CD4-positive, alpha-beta T cell (primary cell): ENCODE measurements at regions of chr2 and their contacts with region 1.

Region 1: DNA sequence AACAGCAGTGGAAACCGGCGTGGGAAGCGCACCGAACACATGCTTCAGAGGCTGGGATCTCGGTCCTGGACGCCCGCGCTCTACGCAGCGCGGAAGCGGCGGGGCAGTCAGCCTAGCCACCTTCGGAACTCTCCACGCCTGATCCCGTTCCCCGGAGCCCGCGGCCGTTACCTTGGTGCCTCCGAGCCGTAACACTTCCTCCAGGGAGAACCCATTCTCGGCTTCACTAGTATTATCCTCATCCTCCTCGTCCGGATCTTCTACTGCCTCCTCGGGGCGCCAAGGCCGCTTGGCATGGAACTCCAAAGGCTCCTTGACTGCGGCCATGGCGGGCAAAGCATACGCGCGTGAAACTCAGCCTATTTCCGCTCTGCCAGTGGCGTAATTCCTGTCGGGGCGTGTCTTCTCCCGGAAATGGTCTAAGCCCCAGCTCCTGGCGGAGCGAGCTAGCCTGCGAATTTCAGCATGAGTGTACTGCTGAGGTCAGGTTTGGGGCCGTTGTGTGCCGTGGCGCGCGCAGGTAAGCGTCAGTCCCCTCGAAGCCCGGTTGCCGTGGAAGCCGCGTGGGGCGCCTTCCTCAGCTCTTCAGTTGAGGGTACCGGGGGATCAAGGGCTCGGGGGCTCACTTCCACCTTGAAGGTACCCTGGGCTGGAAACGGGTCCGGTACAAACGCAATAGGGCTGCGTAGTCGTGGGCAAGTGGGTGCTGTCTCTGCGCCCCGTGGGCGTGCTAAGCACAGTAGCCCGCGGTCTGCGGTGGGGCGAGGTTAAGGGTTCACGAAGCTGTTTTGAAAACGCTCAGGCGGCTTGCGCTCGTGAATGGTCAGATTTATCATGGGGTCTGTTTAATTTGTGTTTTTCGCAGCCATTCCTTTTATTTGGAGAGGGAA is at the starts of genes CEBPZ and NDUFAF7:
- DNase-seq: peak; percentile 75 to 95 (median 83)
- ATAC-seq: peak; percentile 88
- H3K4me3 ChIP-seq: peak within 1 kb of the TSS; percentile 79
- H3K4me3 Mint-ChIP-seq: no peak within 1 kb of the TSS
- H3K27ac ChIP-seq: peak within 1 kb of the TSS; percentile 85
- H3K27ac Mint-ChIP-seq: no peak within 1 kb of the TSS
- H3K4me1 ChIP-seq: peaks cover 31% of the 10 kb centered on the region
- H3K4me1 Mint-ChIP-seq: peaks cover 38% of the 10 kb centered on the region
- H3K27me3 ChIP-seq: no peaks in the 10 kb centered on the region
- H3K27me3 Mint-ChIP-seq: no peaks in the 10 kb centered on the region
- CTCF ChIP-seq: no peak
- total RNA-seq, gene CEBPZ: 92.3 to 102 TPM
- total RNA-seq, gene NDUFAF7: 21.4 to 24.1 TPM

Region 2: DNA sequence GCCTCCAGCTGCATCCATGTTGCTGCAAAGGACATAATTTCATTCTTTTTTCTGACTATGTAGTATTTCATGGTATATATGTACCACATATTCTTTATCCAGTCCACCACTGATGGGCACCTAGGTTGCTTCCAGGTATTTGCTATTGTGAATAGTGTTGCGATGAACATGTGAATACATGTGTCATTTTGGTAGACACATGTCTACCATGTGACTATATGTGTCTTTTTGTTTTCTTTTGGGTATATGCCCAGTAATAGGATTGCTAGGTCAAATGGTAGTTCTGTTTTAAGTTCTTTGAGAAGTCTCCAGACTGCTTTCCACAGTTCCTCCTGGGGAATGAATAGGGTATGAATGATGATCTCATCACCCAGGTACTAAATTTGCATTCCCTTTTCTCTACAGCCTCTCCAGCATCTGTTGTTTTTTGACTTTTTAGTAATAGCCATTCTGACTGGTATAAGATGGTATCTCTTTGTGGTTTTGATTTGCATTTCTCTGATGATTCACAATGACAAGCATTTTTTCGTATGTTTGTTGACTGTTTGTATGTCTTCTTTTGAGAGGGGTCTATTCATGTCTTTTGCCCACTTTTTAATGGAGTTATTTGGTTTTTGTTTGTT is 597.9 kb before region 1 on chr2:
- CTCF ChIA-PET with region 1: no interaction called
- POLR2A ChIA-PET with region 1: no interaction called
- intact Hi-C with region 1: no loop called
- DNase-seq: no peak
- ATAC-seq: no peak
- H3K4me3 ChIP-seq: no peak overlapping the region
- H3K4me3 Mint-ChIP-seq: no peak overlapping the region
- H3K27ac ChIP-seq: no peak overlapping the region
- H3K27ac Mint-ChIP-seq: no peak overlapping the region
- H3K4me1 ChIP-seq: no peaks in the 10 kb centered on the region
- H3K4me1 Mint-ChIP-seq: no peaks in the 10 kb centered on the region
- H3K27me3 ChIP-seq: peaks cover 0 to 4% of the 10 kb centered on the region in 2 experiments
- H3K27me3 Mint-ChIP-seq: peaks cover 14% of the 10 kb centered on the region
- CTCF ChIP-seq: no peak

Region 3: GRCh38 chr2:36731941-36732648 is 499.4 kb before region 1 on chr2:
- CTCF ChIA-PET with region 1: no interaction called
- POLR2A ChIA-PET with region 1: no interaction called
- intact Hi-C with region 1: no loop called
- DNase-seq: no peak
- ATAC-seq: no peak
- H3K4me3 ChIP-seq: no peak overlapping the region
- H3K4me3 Mint-ChIP-seq: no peak overlapping the region
- H3K27ac ChIP-seq: no peak overlapping the region
- H3K27ac Mint-ChIP-seq: no peak overlapping the region
- H3K4me1 ChIP-seq: no peaks in the 10 kb centered on the region
- H3K4me1 Mint-ChIP-seq: no peaks in the 10 kb centered on the region
- H3K27me3 ChIP-seq: peaks cover 0 to under 1% of the 10 kb centered on the region in 2 experiments
- H3K27me3 Mint-ChIP-seq: peaks cover 2% of the 10 kb centered on the region
- CTCF ChIP-seq: no peak

Region 4: GRCh38 chr2:37083873-37084794 is 147.4 kb before region 1 on chr2 and contains the starts of genes GPATCH11 and HEATR5B:
- CTCF ChIA-PET with region 1: no interaction called
- POLR2A ChIA-PET with region 1: interaction called, 4 read pairs
- intact Hi-C with region 1: loop called in 1 of 2 experiments (anchors 5 kb)
- DNase-seq: peak; percentile 80 to 98 (median 89)
- ATAC-seq: peak; percentile 84
- H3K4me3 ChIP-seq: peak within 1 kb of the TSS; percentile 94
- H3K4me3 Mint-ChIP-seq: no peak within 1 kb of the TSS
- H3K27ac ChIP-seq: peak within 1 kb of the TSS; percentile 77 to 82
- H3K27ac Mint-ChIP-seq: no peak within 1 kb of the TSS
- H3K4me1 ChIP-seq: peaks cover 42% of the 10 kb centered on the region
- H3K4me1 Mint-ChIP-seq: no peaks in the 10 kb centered on the region
- H3K27me3 ChIP-seq: no peaks in the 10 kb centered on the region
- H3K27me3 Mint-ChIP-seq: no peaks in the 10 kb centered on the region
- CTCF ChIP-seq: no peak
- total RNA-seq, gene GPATCH11: 4.0 to 4.1 TPM
- total RNA-seq, gene HEATR5B: 23.4 to 23.9 TPM

Region 5: GRCh38 chr2:37168217-37168981 is 63.1 kb before region 1 on chr2:
- CTCF ChIA-PET with region 1: no interaction called
- POLR2A ChIA-PET with region 1: no interaction called
- intact Hi-C with region 1: loop called in 1 of 2 experiments (anchors 5 kb)
- DNase-seq: peak in 6 of 14 experiments; percentile 6 to 66 (median 46)
- ATAC-seq: peak; percentile 85
- H3K4me3 ChIP-seq: no peak overlapping the region
- H3K4me3 Mint-ChIP-seq: no peak overlapping the region
- H3K27ac ChIP-seq: no peak overlapping the region
- H3K27ac Mint-ChIP-seq: no peak overlapping the region
- H3K4me1 ChIP-seq: no peaks in the 10 kb centered on the region
- H3K4me1 Mint-ChIP-seq: no peaks in the 10 kb centered on the region
- H3K27me3 ChIP-seq: no peaks in the 10 kb centered on the region
- H3K27me3 Mint-ChIP-seq: no peaks in the 10 kb centered on the region
- CTCF ChIP-seq: peak; percentile 71

Region 6: GRCh38 chr2:37244017-37244416 is 12.5 kb after region 1 on chr2:
- CTCF ChIA-PET with region 1: interaction called, 6 read pairs
- POLR2A ChIA-PET with region 1: interaction called, 10 read pairs
- intact Hi-C with region 1: no loop called
- DNase-seq: peak in 2 of 14 experiments; percentile 8 to 32
- ATAC-seq: peak; percentile 63
- H3K4me3 ChIP-seq: no peak overlapping the region
- H3K4me3 Mint-ChIP-seq: no peak overlapping the region
- H3K27ac ChIP-seq: no peak overlapping the region
- H3K27ac Mint-ChIP-seq: peak overlapping the region; percentile 78
- H3K4me1 ChIP-seq: peaks cover 5% of the 10 kb centered on the region
- H3K4me1 Mint-ChIP-seq: peaks cover 29% of the 10 kb centered on the region
- H3K27me3 ChIP-seq: no peaks in the 10 kb centered on the region
- H3K27me3 Mint-ChIP-seq: no peaks in the 10 kb centered on the region
- CTCF ChIP-seq: no peak

Region 7: DNA sequence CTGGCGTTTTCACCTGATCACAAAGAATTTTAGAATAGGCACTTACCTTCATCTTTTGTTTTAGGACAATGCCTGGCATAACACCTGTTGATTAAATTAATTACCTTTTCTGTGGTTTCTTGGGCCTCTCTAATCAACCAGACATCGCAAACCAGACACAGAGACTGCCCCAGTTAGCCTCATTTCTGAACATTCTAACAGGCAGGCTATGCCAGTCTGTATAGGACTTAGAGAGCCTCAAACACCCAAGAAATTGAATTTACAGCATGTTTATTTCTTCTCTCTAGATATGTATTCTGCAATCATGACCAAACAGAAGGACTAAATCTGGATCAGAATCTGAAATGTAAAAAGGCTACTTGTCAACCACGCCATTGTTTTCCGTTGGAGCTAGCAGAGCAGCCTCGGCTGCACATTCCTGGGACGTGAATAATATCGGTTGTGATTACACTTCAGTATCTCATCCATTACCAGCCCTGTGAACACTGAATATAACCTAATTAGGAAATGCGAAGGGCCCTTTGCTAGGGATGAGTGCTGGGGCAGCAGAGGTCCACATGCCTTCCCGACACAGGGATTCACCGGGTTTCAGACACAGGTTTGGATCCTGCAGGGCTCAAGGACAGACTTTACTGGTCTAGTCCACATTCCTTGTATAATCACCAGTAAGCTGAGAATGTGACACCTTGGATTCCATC is 457.4 kb after region 1 on chr2:
- CTCF ChIA-PET with region 1: no interaction called
- POLR2A ChIA-PET with region 1: no interaction called
- intact Hi-C with region 1: no loop called
- DNase-seq: no peak
- ATAC-seq: no peak
- H3K4me3 ChIP-seq: no peak overlapping the region
- H3K4me3 Mint-ChIP-seq: no peak overlapping the region
- H3K27ac ChIP-seq: no peak overlapping the region
- H3K27ac Mint-ChIP-seq: no peak overlapping the region
- H3K4me1 ChIP-seq: no peaks in the 10 kb centered on the region
- H3K4me1 Mint-ChIP-seq: peaks cover 14% of the 10 kb centered on the region
- H3K27me3 ChIP-seq: no peaks in the 10 kb centered on the region
- H3K27me3 Mint-ChIP-seq: no peaks in the 10 kb centered on the region
- CTCF ChIP-seq: no peak